ENCODE measurements at regions of chr5 and their contacts with region 1.

Region 1: DNA sequence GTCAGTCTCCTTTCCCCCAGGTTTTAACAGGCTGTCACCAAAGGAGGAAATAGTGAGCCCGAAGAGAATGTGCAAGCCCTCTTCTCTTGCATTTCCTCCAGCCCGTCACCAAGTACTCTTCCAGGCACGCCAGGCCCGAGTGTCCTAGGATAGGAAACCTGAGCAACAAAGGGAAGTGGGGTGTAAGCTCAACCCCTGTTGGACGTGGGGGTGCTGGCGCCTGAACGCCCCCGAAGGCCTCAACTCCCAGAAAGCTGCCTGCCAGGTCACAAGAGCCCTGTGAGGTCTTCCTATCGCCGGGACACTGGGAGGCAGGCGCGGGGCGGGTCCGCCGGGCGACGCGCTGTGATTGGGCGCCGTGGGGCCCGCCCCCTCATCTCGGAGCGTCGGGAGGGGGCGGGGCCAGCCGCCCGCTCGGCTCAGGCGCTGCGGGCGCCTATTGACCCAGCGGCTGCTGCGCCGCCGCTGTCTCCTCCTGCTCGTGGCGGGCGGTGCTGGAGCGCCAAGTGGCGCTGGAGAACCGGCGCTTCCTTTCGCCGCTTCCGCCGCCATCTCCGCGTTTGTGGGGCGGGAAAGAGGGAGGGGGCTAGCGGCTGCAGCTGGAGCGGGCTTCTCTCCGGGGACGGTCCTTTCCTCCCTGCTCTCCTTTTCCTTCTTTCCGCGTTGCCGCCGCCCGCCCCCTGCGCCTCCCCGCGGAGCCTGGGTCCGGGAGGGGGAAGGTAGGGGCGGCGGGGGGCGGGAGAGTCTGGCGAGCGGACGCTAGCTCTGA is 572 bp upstream of the MAN2A1 start:
- DNase-seq: peak; percentile 95
- H3K4me3 ChIP-seq: peak overlapping the region; percentile 91
- H3K27ac ChIP-seq: peak overlapping the region; percentile 95
- H3K4me1 ChIP-seq: peaks cover 28% of the 10 kb centered on the region
- H3K27me3 ChIP-seq: no peaks in the 10 kb centered on the region
- CTCF ChIP-seq: no peak

Region 2: GRCh38 chr5:108521841-108522506 is 1167.2 kb before region 1 on chr5:
- CTCF ChIA-PET with region 1: no interaction called
- POLR2A ChIA-PET with region 1: no interaction called
- intact Hi-C with region 1: loop called (anchors 5 kb)
- DNase-seq: peak; percentile 82
- H3K4me3 ChIP-seq: no peak overlapping the region
- H3K27ac ChIP-seq: no peak overlapping the region
- H3K4me1 ChIP-seq: peaks cover 11% of the 10 kb centered on the region
- H3K27me3 ChIP-seq: no peaks in the 10 kb centered on the region
- CTCF ChIP-seq: peak; percentile 79

Region 3: DNA sequence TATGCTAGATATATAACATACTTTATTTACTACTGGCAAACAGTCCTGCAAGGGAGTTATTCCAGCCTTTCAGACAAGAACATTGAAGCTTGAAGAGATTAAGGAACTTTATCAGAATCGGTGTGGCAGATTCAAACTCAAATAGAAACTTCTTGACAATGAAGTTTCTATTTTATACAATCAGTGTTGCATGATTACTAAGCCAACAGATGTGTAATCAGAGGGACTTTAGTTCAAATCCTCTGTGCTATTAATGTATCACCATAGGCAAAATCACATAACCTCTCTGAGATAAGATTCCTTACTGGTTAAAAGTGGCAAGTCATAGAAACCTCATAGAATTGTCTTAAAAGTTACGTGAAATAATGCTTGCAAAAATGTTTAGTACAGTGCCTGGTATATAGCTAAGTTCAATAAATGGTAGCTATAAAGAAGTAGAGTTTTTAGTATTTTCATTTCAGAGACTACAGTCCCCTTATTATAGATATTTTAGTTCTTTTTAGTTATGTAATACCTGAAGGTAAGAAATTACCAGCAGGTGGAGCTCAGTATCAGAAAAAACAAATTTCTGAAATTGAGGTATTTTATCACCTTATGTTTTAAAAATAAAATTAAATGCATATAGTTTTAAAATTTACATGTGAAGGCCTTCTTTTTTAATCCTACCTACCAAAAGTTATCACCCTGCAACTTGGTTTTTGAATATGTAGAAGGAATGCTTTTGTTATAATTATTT is 769.4 kb before region 1 on chr5:
- CTCF ChIA-PET with region 1: no interaction called
- POLR2A ChIA-PET with region 1: no interaction called
- intact Hi-C with region 1: loop called (anchors 5 kb)
- DNase-seq: peak; percentile 20
- H3K4me3 ChIP-seq: no peak overlapping the region
- H3K27ac ChIP-seq: no peak overlapping the region
- H3K4me1 ChIP-seq: peaks cover 9% of the 10 kb centered on the region
- H3K27me3 ChIP-seq: no peaks in the 10 kb centered on the region
- CTCF ChIP-seq: peak; percentile 57

Region 4: GRCh38 chr5:109506556-109506955 is 182.6 kb before region 1 on chr5:
- CTCF ChIA-PET with region 1: interaction called, 4 read pairs
- POLR2A ChIA-PET with region 1: no interaction called
- intact Hi-C with region 1: loop called (anchors 10 kb)
- DNase-seq: no peak
- H3K4me3 ChIP-seq: no peak overlapping the region
- H3K27ac ChIP-seq: no peak overlapping the region
- H3K4me1 ChIP-seq: peaks cover 34% of the 10 kb centered on the region
- H3K27me3 ChIP-seq: no peaks in the 10 kb centered on the region
- CTCF ChIP-seq: no peak

Region 5: GRCh38 chr5:109645707-109646192 is 43.4 kb before region 1 on chr5:
- CTCF ChIA-PET with region 1: no interaction called
- POLR2A ChIA-PET with region 1: no interaction called
- intact Hi-C with region 1: loop called (anchors 2 kb)
- DNase-seq: peak; percentile 95
- H3K4me3 ChIP-seq: peak overlapping the region; percentile 22
- H3K27ac ChIP-seq: peak overlapping the region; percentile 97
- H3K4me1 ChIP-seq: peaks cover 59% of the 10 kb centered on the region
- H3K27me3 ChIP-seq: no peaks in the 10 kb centered on the region
- CTCF ChIP-seq: no peak

Region 6: GRCh38 chr5:109852371-109853155 is 163.4 kb after region 1 on chr5:
- CTCF ChIA-PET with region 1: no interaction called
- POLR2A ChIA-PET with region 1: no interaction called
- intact Hi-C with region 1: loop called (anchors 5 kb)
- DNase-seq: no peak
- H3K4me3 ChIP-seq: no peak overlapping the region
- H3K27ac ChIP-seq: no peak overlapping the region
- H3K4me1 ChIP-seq: peaks cover 4% of the 10 kb centered on the region
- H3K27me3 ChIP-seq: no peaks in the 10 kb centered on the region
- CTCF ChIP-seq: no peak

Region 7: DNA sequence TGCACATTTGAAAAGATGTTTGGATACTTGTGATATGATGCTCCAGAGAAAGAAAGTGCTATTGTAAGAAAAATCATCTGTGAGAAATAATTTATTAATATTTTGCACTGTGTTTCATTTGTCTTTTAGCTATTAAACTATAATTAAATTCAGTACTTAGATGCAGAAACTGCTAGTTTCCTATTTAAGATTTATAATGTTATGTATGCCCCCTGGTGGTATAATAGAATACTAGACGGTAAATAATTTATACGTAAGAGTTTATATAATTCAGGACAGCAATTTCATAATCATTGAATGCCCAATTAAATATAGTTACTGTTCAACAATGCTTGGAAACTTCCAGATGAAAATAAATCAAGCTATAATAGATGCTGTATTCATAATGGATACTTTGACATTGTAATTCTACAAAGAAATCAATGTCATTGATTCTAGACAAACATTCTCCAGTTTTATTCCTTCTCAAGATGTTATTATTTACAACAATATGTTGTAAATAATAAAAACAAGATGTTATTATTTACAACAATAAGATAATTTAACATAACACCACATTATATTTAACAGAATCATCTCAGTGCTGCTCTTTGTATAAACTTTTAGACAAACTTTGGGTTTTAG is 936.3 kb after region 1 on chr5:
- CTCF ChIA-PET with region 1: no interaction called
- POLR2A ChIA-PET with region 1: no interaction called
- intact Hi-C with region 1: loop called (anchors 10 kb)
- DNase-seq: peak; percentile 70
- H3K4me3 ChIP-seq: no peak overlapping the region
- H3K27ac ChIP-seq: no peak overlapping the region
- H3K4me1 ChIP-seq: peaks cover 4% of the 10 kb centered on the region
- H3K27me3 ChIP-seq: no peaks in the 10 kb centered on the region
- CTCF ChIP-seq: peak; percentile 64

Region 8: GRCh38 chr5:110852053-110852452 is 1162.9 kb after region 1 on chr5:
- CTCF ChIA-PET with region 1: no interaction called
- POLR2A ChIA-PET with region 1: no interaction called
- intact Hi-C with region 1: no loop called
- DNase-seq: no peak
- H3K4me3 ChIP-seq: no peak overlapping the region
- H3K27ac ChIP-seq: no peak overlapping the region
- H3K4me1 ChIP-seq: no peaks in the 10 kb centered on the region
- H3K27me3 ChIP-seq: no peaks in the 10 kb centered on the region
- CTCF ChIP-seq: no peak

Measured in A673 (cell line).